ENCODE measurements at regions of chr20 and their contacts with region 1.

Region 1: DNA sequence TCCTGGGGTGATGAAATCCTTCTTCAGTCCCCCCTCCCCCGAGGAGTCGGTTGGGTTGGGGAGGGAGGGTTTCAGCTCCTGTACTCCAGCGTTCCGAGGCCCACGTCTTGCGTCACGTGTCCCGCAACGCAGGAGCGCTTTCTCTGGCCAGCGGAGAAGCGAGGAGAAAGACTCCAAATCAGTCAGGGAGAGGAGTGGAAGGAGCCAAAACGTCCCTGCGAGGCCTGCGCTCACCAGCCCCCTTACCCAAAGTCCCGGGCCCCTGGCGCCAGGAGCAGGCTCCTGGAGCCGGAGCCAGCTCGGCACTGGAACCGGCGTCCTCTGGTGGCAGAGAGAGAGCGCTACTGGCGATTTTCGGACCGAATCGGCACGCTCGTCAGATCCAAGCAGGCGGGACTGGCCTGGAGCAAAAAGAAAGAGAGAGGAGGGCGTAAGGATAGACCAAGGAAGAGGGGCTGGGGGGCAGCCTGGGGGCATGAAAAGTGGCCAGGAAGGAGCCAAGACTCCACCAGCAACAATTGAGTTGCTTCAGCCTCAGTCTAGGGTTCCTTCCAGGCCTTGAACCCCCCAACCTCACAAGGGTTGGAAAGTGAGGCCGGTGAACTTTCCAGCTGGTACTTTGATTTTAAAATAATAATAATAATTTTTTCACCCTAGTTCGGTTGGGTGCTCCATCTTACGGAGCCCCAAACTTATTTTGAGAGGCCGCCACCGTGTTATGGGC is at the start of gene GNAS:
- DNase-seq: peak; percentile 74
- H3K4me3 ChIP-seq: peak within 1 kb of the TSS; percentile 37 to 47; a peak in 2 of 4 replicates
- H3K27ac ChIP-seq: no peak within 1 kb of the TSS
- H3K4me1 ChIP-seq: peaks cover 0 to 23% of the 10 kb centered on the region in 2 experiments; a peak in 1 of 4 replicates
- H3K27me3 ChIP-seq: peaks cover 4% of the 10 kb centered on the region; the same call in 1 of the 2 replicates
- CTCF ChIP-seq: peak; percentile 59
- EP300 ChIP-seq: no peak
- RAD21 ChIP-seq: peak; percentile 47
- polyA plus RNA-seq, gene GNAS: 1,011 and 1,562 TPM in 2 replicates

Region 2: GRCh38 chr20:58623826-58624473 is 228.8 kb before region 1 on chr20:
- CTCF ChIA-PET with region 1: no interaction called
- POLR2A ChIA-PET with region 1: no interaction called
- DNase-seq: peak; percentile 60
- H3K4me3 ChIP-seq: no peak overlapping the region
- H3K27ac ChIP-seq: peak overlapping the region; percentile 81 to 99
- H3K4me1 ChIP-seq: peaks cover 12 to 28% of the 10 kb centered on the region in 2 experiments; a peak in 3 of 4 replicates
- H3K27me3 ChIP-seq: no peaks in the 10 kb centered on the region
- CTCF ChIP-seq: 0 out of 2 replicates have a peak, but pooled peaks have one; percentile 6
- EP300 ChIP-seq: peak; percentile 25 to 99; a peak in 2 of 4 replicates
- RAD21 ChIP-seq: no peak

Region 3: DNA sequence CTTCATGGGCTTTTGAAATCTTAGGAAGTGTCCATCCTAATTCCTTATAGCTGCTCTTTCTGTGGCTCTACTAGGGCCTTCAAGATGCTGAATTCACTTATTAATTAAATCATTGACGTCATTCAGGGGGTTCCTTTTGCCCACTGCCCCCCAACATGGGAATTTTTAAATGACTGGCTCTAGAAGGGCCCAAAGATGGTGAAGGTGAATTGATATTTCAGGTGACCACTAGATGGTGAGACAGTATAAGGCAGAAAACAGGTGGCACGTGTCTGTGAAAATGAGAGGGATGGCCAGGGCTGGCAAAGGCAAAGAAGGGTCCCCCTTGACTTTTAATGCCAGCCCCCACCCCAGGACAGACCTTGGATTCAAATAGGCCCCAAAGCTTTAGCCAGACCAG is 11.6 kb after region 1 on chr20:
- CTCF ChIA-PET with region 1: interaction called, 16 read pairs
- POLR2A ChIA-PET with region 1: no interaction called
- DNase-seq: peak; percentile 49
- H3K4me3 ChIP-seq: no peak overlapping the region
- H3K27ac ChIP-seq: no peak overlapping the region
- H3K4me1 ChIP-seq: no peaks in the 10 kb centered on the region
- H3K27me3 ChIP-seq: no peaks in the 10 kb centered on the region
- CTCF ChIP-seq: peak; percentile 27
- EP300 ChIP-seq: no peak
- RAD21 ChIP-seq: peak; percentile 77

Region 4: GRCh38 chr20:59063358-59064213 is 210.9 kb after region 1 on chr20:
- CTCF ChIA-PET with region 1: no interaction called
- POLR2A ChIA-PET with region 1: no interaction called
- DNase-seq: peak; percentile 45
- H3K4me3 ChIP-seq: peak overlapping the region; percentile 4 to 31; a peak in 2 of 4 replicates
- H3K27ac ChIP-seq: peak overlapping the region in 1 of 2 experiments; percentile 81; a peak in 3 of 4 replicates
- H3K4me1 ChIP-seq: peaks cover 8 to 16% of the 10 kb centered on the region in 2 experiments; a peak in 3 of 4 replicates
- H3K27me3 ChIP-seq: no peaks in the 10 kb centered on the region
- CTCF ChIP-seq: no peak
- EP300 ChIP-seq: no peak
- RAD21 ChIP-seq: no peak